ENCODE measurements at regions of chr2 and their contacts with region 1.

Region 1: DNA sequence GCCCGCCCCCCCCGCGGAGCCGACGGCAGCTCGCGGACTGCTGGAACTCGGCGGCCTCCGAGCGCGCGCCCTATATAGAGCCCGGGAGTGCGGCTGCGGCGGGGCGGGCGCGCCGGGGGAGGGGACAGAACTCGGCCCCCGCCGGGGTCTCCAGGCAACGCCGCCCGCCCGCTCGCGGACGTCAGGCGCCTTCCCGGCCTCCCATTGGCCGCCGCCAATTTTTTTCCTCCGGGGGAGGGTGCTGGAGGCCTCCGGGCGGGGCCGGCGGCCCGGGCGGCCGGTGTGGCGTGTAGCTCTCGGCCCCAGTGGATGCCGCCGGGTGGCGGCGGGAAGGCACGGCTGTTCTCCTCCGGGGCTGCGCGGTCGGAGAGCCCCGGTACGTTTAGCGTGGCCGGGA is at the start of gene ZFP36L2:
- DNase-seq: peak; percentile 92
- ATAC-seq: peak; percentile 63
- H3K4me3 ChIP-seq: peak within 1 kb of the TSS; percentile 80 to 97 (median 89)
- H3K27ac ChIP-seq: peak within 1 kb of the TSS; percentile 95
- H3K4me1 ChIP-seq: peaks cover 54% of the 10 kb centered on the region
- H3K27me3 ChIP-seq: no peaks in the 10 kb centered on the region
- CTCF ChIP-seq: no peak; the same call in 1 of the 2 replicates
- EP300 ChIP-seq: peak in 1 of 2 experiments; percentile 15; a peak in 1 of 4 replicates
- POLR2A ChIP-seq: peak in 1 of 2 experiments; percentile 98; a peak in 2 of 4 replicates
- RAD21 ChIP-seq: peak; percentile 36; the same call in 1 of the 2 replicates
- total RNA-seq, gene ZFP36L2: 21.8 and 32.5 TPM in 2 replicates

Region 2: GRCh38 chr2:42922790-42923579 is 303.6 kb before region 1 on chr2:
- CTCF ChIA-PET with region 1: interaction called, 3 read pairs
- POLR2A ChIA-PET with region 1: interaction called, 37 read pairs
- in situ Hi-C with region 1: loop called (anchors 5 kb)
- intact Hi-C with region 1: no loop called
- DNase-seq: peak; percentile 42
- ATAC-seq: no peak
- H3K4me3 ChIP-seq: peak overlapping the region in 1 of 3 experiments; percentile 8; a peak in 1 of 6 replicates
- H3K27ac ChIP-seq: no peak overlapping the region
- H3K4me1 ChIP-seq: peaks cover 69% of the 10 kb centered on the region
- H3K27me3 ChIP-seq: peaks cover 0 to 7% of the 10 kb centered on the region in 2 experiments; a peak in 2 of 5 replicates
- CTCF ChIP-seq: no peak
- EP300 ChIP-seq: no peak
- POLR2A ChIP-seq: no peak
- RAD21 ChIP-seq: no peak

Region 3: GRCh38 chr2:42987112-42987922 is 239.2 kb before region 1 on chr2:
- CTCF ChIA-PET with region 1: no interaction called
- POLR2A ChIA-PET with region 1: interaction called, 11 read pairs
- in situ Hi-C with region 1: no loop called
- intact Hi-C with region 1: no loop called
- DNase-seq: peak; percentile 91
- ATAC-seq: peak; percentile 74
- H3K4me3 ChIP-seq: no peak overlapping the region
- H3K27ac ChIP-seq: peak overlapping the region; percentile 73
- H3K4me1 ChIP-seq: peaks cover 81% of the 10 kb centered on the region
- H3K27me3 ChIP-seq: no peaks in the 10 kb centered on the region
- CTCF ChIP-seq: no peak
- EP300 ChIP-seq: peak in 1 of 2 experiments; percentile 77; a peak in 2 of 4 replicates
- POLR2A ChIP-seq: no peak
- RAD21 ChIP-seq: no peak

Region 4: DNA sequence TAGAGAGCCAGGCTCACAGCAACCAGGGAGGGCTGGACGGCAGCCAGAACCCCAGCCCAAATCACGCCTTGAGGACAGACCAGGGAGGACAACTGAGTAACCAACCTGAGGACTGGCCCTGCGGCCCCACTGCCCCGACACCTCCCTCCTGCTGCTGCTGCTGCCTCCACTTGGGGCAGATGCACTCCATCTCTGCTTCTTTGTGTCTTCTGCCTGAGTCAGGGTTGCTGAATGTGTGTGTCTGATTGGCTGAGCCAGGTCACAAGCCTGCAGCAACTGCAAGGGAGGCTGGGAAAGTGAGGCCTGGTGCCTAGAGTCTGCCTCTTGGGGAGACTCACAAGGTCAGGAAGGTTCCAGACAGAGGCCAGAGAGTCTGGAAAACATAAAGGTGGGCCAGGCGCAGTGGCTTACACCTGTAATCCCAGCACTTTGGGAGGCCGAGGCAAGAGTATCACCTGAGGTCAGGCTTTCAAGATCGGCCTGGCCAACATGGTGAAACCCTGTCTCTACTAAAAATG is 83.6 kb before region 1 on chr2:
- CTCF ChIA-PET with region 1: no interaction called
- POLR2A ChIA-PET with region 1: interaction called, 19 read pairs
- in situ Hi-C with region 1: no loop called
- intact Hi-C with region 1: no loop called
- DNase-seq: peak; percentile 78
- ATAC-seq: peak; percentile 86
- H3K4me3 ChIP-seq: no peak overlapping the region
- H3K27ac ChIP-seq: peak overlapping the region; percentile 0
- H3K4me1 ChIP-seq: peaks cover 62% of the 10 kb centered on the region
- H3K27me3 ChIP-seq: no peaks in the 10 kb centered on the region
- CTCF ChIP-seq: peak; percentile 70
- EP300 ChIP-seq: no peak
- POLR2A ChIP-seq: no peak
- RAD21 ChIP-seq: peak; percentile 75

Region 5: DNA sequence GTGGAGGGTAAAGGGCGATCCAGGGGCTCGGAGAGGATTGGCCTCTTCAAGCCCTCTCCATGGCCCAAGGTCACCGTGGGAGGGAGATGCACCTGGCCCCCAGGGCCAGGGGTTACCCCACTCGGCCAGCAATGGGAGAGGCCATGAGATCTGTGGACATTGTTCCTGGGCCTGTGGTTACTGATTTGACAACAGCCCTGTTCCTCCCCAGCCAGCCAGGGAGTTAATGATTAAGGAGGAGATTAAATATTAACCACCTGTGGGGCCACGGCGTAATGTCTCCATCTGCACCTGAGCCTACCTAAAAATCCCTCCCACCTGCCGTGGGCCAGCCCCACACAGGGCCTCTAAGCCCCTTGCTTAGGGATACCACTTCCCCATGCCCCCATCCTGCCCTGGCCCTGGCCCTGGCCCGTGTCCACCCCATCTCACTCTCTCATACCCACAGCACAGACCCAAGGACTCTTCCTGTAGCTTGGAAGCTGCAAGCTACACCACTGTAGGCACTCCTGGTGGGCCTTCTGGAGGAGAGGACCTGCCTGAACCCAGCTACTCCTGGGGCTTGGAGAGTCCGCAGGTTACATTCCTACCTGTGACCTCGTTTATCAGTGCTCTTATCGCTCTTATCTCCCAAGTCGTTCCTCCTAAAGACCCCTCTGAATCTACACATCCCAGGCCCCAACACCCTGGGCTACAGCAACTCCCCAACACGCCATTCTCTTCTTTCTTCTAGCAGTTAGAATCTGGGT is 32.3 kb before region 1 on chr2:
- CTCF ChIA-PET with region 1: no interaction called
- POLR2A ChIA-PET with region 1: interaction called, 324 read pairs
- in situ Hi-C with region 1: no loop called
- intact Hi-C with region 1: loop called (anchors 1 kb)
- DNase-seq: peak; percentile 98
- ATAC-seq: peak; percentile 87
- H3K4me3 ChIP-seq: peak overlapping the region; percentile 49 to 76 (median 64)
- H3K27ac ChIP-seq: peak overlapping the region; percentile 95
- H3K4me1 ChIP-seq: peaks cover 96% of the 10 kb centered on the region
- H3K27me3 ChIP-seq: no peaks in the 10 kb centered on the region
- CTCF ChIP-seq: peak; percentile 14; the same call in 1 of the 2 replicates
- EP300 ChIP-seq: peak; percentile 70 to 94; a peak in 3 of 4 replicates
- POLR2A ChIP-seq: peak in 1 of 2 experiments; percentile 79; a peak in 2 of 4 replicates
- RAD21 ChIP-seq: no peak; the same call in 1 of the 2 replicates

Region 6: DNA sequence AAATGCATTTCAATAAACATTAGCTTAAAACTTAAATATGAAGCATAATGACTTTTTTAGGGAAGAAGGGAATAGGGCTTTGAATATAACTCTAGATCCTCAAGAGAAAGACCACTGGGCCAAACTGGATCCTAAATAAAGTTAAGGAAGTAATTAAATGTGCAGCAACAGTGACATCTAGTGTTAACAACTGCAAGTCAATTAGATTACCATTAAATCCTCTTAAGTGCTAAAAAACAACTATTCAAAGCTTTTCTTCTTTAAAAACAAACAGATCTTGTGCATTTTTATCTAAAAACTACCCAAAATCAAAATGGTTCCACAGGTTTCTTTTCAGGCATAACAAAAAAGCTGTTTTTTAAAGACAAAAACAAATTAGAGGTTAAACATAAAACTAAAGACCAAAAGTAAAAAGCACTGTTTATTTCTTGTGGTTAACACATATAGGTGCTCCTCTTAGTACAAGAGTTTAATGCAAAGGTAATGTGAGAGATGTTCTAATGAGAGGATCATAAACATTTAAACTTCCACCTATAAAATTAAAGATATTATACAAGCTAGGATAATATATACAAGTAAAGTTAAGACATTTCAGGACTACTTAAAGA is 257.9 kb after region 1 on chr2:
- CTCF ChIA-PET with region 1: interaction called, 17 read pairs
- POLR2A ChIA-PET with region 1: interaction called, 20 read pairs
- in situ Hi-C with region 1: loop called (anchors 5 kb)
- intact Hi-C with region 1: loop called (anchors 1 kb)
- DNase-seq: peak; percentile 85
- ATAC-seq: no peak
- H3K4me3 ChIP-seq: no peak overlapping the region
- H3K27ac ChIP-seq: no peak overlapping the region
- H3K4me1 ChIP-seq: peaks cover 15% of the 10 kb centered on the region; the same call in 1 of the 2 replicates
- H3K27me3 ChIP-seq: no peaks in the 10 kb centered on the region
- CTCF ChIP-seq: peak; percentile 79
- EP300 ChIP-seq: no peak
- POLR2A ChIP-seq: no peak
- RAD21 ChIP-seq: peak; percentile 84